ENCODE measurements at regions of chr12 and their contacts with region 1.

Region 1: DNA sequence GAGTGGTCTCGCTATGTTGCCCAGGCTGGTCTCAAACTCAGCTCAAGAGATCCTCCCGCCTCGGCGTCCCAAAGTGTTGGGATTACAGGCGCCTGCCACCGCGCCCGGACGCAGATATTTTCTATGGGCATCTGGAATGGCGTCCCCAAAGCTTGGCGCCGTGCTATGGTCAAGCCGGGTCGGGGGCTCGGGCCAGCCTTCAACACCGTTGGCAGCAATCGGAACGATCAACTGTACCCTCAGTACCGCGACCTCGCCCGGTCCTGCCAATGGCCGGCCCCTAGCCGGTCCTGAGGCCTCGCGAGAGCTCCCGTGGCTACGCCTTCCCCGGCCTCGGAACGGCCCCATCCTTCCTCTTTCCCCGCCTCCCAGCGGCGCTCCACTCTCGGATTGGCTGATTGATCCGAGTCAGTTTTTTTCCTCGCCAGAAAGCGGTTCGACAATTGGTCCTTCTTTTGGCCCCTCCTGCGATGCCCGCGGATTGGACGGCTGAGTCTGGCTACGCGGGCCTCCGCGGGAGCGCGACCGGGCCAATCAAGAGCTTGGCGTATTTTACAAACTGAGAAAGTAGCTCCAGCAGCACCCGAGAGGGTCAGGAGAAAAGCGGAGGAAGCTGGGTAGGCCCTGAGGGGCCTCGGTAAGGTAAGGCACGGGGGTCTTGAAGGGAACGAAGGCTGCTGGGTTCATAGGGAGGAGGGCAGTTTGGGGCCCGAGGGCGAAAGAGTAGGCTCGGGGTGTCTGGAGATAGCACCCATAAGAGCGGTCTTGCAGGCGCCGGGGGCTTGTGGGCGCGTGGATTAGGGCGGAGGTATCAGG is at the start of gene TROAP:
- DNase-seq: peak; percentile 99
- H3K4me3 Mint-ChIP-seq: peak within 1 kb of the TSS; percentile 98
- H3K27ac Mint-ChIP-seq: peak within 1 kb of the TSS; percentile 91
- H3K4me1 Mint-ChIP-seq: peaks cover 17% of the 10 kb centered on the region
- H3K27me3 Mint-ChIP-seq: no peaks in the 10 kb centered on the region
- total RNA-seq, gene TROAP: 67.4 to 68.8 TPM

Region 2: DNA sequence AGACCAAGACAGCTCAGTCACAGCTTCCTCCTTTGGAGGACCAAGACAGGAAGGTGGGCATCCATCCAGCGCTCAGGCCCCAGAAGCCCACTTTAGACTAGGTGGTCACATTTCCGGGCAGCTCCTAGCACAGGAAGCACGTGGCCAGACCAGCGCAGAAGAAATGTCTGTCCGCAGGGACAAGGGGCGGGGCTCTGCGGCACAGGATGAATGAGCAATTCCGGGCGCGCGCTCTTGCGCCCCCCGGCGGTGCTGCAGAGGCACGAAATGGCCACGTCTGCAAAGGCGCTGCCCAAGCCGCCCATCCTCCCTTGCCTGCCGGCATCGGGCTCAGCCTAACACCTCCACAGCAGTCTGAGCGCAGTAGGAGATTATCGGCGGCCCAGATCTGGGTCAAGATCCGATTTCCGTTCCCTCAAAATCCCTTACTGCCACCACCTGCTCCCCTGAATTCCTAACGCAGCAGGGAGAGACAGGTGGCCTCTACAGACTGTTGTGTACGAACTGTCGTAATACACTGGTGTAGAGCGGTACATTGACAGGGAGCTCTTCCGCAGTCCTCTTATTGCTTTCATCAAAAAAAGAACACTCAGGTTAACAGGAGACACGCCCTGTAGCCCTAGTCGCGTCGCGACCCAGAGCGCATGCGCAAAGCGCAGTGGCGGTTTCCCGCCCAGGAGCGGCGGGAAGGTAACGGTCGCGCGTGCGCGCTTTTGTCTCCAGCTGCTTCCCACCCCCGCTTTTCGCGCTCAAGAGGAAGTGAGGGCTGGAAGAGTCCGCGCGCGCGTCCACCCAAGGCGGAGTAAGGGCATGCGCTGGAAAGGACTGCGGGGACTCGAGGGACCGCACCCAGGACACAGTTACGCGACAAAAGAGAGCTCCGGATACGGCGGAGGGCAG is 192.5 kb before region 1 on chr12:
- CTCF ChIA-PET with region 1: no interaction called
- intact Hi-C with region 1: loop called (anchors 1 kb)
- DNase-seq: peak; percentile 96
- H3K4me3 Mint-ChIP-seq: peak overlapping the region; percentile 97
- H3K27ac Mint-ChIP-seq: peak overlapping the region; percentile 100
- H3K4me1 Mint-ChIP-seq: peaks cover 43% of the 10 kb centered on the region
- H3K27me3 Mint-ChIP-seq: no peaks in the 10 kb centered on the region

Region 3: GRCh38 chr12:49256274-49256637 is 66.7 kb before region 1 on chr12:
- CTCF ChIA-PET with region 1: no interaction called
- intact Hi-C with region 1: no loop called
- DNase-seq: no peak
- H3K4me3 Mint-ChIP-seq: no peak overlapping the region
- H3K27ac Mint-ChIP-seq: no peak overlapping the region
- H3K4me1 Mint-ChIP-seq: peaks cover 5% of the 10 kb centered on the region
- H3K27me3 Mint-ChIP-seq: no peaks in the 10 kb centered on the region

Region 4: GRCh38 chr12:49296034-49296835 is 26.7 kb before region 1 on chr12:
- CTCF ChIA-PET with region 1: interaction called, 14 read pairs
- intact Hi-C with region 1: loop called (anchors 1 kb)
- DNase-seq: peak; percentile 70
- H3K4me3 Mint-ChIP-seq: peak overlapping the region; percentile 50
- H3K27ac Mint-ChIP-seq: no peak overlapping the region
- H3K4me1 Mint-ChIP-seq: peaks cover 12% of the 10 kb centered on the region
- H3K27me3 Mint-ChIP-seq: peaks cover 54% of the 10 kb centered on the region

Region 5: DNA sequence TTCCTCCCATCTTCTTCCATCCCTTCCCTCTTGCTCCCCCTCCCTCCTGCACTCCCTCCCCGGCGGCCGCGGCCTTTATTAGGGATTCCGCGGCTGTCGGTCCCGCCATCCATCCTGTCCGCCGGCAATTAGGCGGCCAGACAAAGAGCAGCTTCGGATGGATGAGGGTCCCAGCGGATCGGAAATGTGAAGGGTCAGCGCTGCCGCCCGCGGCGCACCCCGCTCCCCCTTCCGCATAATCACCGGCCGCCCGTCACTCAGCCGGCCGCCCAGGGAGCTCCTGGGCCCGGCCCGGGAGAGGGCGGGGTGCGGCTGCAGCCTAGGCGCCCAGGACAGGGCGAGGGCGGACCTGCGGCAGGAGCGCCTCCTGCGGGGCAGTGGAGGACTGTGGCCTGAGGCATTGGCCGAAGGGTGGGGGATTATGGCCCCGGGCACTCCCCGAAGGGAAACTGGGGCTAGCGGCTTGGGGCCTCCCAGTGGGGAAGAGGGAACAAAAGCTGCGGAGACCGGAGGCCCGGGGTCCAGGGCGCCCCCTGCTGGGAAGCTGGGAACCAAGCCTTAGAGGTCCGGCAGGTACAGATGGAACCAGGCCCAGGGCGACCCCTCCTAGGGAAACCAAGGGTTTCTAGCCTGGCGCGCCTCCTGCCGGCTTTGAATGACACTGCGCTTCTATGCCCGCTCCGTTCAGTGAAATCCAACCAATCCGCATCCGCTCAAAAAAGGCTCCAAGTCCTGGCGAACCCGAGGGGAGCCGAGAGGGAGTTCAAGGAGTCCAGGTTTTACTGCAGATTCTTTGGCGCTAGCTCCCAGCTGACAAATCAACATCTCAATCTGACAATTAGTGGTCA is 19.4 kb after region 1 on chr12:
- CTCF ChIA-PET with region 1: interaction called, 29 read pairs
- intact Hi-C with region 1: loop called (anchors 1 kb)
- DNase-seq: peak; percentile 90
- H3K4me3 Mint-ChIP-seq: no peak overlapping the region
- H3K27ac Mint-ChIP-seq: no peak overlapping the region
- H3K4me1 Mint-ChIP-seq: peaks cover 48% of the 10 kb centered on the region
- H3K27me3 Mint-ChIP-seq: peaks cover 78% of the 10 kb centered on the region

Region 6: GRCh38 chr12:49451468-49452259 is 128.7 kb after region 1 on chr12:
- CTCF ChIA-PET with region 1: no interaction called
- intact Hi-C with region 1: loop called (anchors 1 kb)
- DNase-seq: no peak
- H3K4me3 Mint-ChIP-seq: no peak overlapping the region
- H3K27ac Mint-ChIP-seq: peak overlapping the region; percentile 78
- H3K4me1 Mint-ChIP-seq: peaks cover 22% of the 10 kb centered on the region
- H3K27me3 Mint-ChIP-seq: no peaks in the 10 kb centered on the region